Heart left ventricle (tissue), 16 donors: ENCODE measurements at regions of chr9 and their contacts with region 1.

Region 1: DNA sequence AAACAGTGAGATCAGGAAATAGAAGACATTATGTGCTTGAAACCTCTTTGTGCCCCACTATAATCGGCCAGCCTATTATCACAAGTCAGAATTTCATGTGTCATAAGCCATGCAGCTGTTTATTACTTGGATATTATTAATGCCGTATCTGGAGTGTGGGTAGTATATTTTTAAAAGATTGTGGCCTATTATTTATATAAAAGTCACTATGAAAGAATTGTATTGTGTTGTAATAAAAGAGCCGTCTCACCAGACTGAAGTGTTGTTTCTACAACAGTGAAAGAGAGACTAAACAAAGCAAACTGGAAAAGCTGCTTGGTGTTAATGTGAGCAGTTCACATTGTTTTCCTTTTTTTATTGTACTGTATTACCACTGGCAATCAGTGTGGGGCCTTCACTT is 449.1 kb downstream of the PSAT1 start:
- DNase-seq: no peak
- ATAC-seq: no peak
- H3K4me3 ChIP-seq: no peak overlapping the region
- H3K27ac ChIP-seq: no peak overlapping the region
- H3K4me1 ChIP-seq: no peaks in the 10 kb centered on the region
- H3K27me3 ChIP-seq: no peaks in the 10 kb centered on the region
- CTCF ChIP-seq: no peak
- POLR2A ChIP-seq: no peak

Region 2: GRCh38 chr9:78685471-78685870 is 60.5 kb before region 1 on chr9:
- intact Hi-C with region 1: loop called in 1 of 10 experiments (anchors 10 kb)
- DNase-seq: no peak
- ATAC-seq: no peak
- H3K4me3 ChIP-seq: no peak overlapping the region
- H3K27ac ChIP-seq: no peak overlapping the region
- H3K4me1 ChIP-seq: no peaks in the 10 kb centered on the region
- H3K27me3 ChIP-seq: no peaks in the 10 kb centered on the region
- CTCF ChIP-seq: no peak
- POLR2A ChIP-seq: no peak